CD4-positive, alpha-beta T cell (primary cell): ENCODE measurements at regions of chrX and their contacts with region 1.

Region 1: DNA sequence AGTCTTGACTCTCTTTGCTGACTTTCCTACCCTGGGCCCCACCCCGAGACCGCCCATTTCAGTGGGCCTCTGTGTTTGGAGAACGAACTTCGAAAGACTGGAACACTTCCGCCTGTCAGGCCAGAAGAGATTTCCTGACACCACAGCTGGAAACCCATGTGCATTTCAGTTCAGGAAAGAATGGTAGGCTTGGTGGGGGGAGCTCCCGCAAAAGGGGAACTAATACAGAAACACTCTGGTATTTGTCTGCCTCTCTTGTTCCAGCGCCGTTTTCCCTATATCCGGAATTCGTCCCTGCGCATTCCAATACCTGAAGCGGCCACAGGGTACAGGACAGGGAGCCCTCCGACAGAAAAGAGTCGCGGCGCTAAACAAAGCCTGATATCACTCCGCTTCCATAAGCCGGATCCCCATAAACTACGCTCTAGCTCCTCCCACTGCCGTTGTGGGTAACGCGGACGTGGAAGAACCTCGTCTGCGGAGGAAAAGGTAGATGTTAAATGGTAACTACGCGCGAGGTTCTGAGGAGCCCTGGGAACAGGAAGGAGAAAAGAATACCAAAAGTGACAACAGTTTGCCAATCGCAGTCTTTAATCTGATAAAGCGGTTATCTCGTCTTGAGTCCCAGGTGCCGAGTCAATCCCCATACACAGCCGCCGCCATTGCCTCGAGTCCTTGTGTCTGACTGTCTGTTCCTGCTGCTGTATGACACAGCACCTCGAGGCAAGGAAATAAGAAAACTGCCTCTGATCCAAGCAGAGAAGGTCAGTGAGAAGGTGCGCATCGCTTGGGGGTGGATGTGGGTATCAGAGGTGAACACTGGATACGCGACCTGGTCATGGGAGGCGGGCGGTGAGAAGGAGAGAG is at the start of gene ARMCX5:
- DNase-seq: peak; percentile 46 to 88 (median 58)
- ATAC-seq: peak; percentile 85
- H3K4me3 ChIP-seq: peak within 1 kb of the TSS; percentile 71
- H3K4me3 Mint-ChIP-seq: peak within 1 kb of the TSS; percentile 99
- H3K27ac ChIP-seq: peak within 1 kb of the TSS; percentile 55 to 70
- H3K27ac Mint-ChIP-seq: peak within 1 kb of the TSS; percentile 100
- H3K4me1 ChIP-seq: peaks cover 11% of the 10 kb centered on the region
- H3K4me1 Mint-ChIP-seq: peaks cover 52% of the 10 kb centered on the region
- H3K27me3 ChIP-seq: no peaks in the 10 kb centered on the region
- H3K27me3 Mint-ChIP-seq: no peaks in the 10 kb centered on the region
- CTCF ChIP-seq: no peak
- total RNA-seq, gene ARMCX5: 14.0 to 15.9 TPM

Region 2: DNA sequence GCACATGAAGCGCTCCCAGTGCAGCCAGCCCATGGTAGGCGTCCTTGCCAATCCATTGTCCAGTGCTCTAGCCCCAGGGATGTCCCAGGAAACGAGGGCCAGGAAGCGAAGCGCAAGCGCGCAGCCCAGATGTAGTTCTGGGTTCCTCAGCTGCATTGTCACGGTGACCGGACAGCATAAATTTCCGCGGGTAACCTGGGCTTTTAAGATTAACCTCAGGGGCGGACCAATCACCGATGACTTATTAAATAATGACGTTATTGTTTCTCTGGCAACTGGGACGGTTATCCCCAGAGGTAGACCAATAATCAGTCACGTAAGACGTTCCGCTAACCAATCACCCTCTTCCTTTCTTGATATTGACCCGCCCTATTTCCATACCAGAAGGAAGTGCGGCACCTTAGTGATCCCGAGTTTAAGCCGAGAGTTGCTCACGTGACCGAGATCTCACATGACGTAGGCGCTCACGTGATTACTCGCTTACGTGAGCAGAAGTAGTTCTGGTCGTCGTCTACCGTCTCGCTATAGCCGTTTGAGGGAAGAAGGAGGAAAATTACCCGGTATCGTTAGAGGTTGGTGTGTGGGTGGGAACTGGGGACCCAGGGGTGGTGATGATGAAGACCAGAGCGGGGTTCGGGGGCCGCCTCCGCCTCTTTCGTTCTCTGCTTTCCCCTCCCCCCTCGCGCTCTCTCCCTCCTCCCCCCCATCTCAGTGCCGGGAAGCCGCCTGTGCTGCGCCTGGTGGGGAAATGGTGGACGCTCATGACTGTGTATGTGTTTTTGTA is 1191.4 kb before region 1 on chrX and contains the starts of genes GLA and HNRNPH2:
- CTCF ChIA-PET with region 1: no interaction called
- POLR2A ChIA-PET with region 1: no interaction called
- intact Hi-C with region 1: loop called in 1 of 2 experiments (anchors 10 kb)
- DNase-seq: peak; percentile 67 to 97 (median 80)
- ATAC-seq: peak; percentile 91
- H3K4me3 ChIP-seq: peak within 1 kb of the TSS; percentile 85
- H3K4me3 Mint-ChIP-seq: peak within 1 kb of the TSS; percentile 97
- H3K27ac ChIP-seq: peak within 1 kb of the TSS; percentile 92 to 99
- H3K27ac Mint-ChIP-seq: peak within 1 kb of the TSS; percentile 97
- H3K4me1 ChIP-seq: peaks cover 29% of the 10 kb centered on the region
- H3K4me1 Mint-ChIP-seq: peaks cover 41% of the 10 kb centered on the region
- H3K27me3 ChIP-seq: no peaks in the 10 kb centered on the region
- H3K27me3 Mint-ChIP-seq: no peaks in the 10 kb centered on the region
- CTCF ChIP-seq: no peak
- total RNA-seq, gene GLA: 26.6 to 26.8 TPM
- total RNA-seq, gene HNRNPH2: 50.9 to 51.4 TPM

Region 3: DNA sequence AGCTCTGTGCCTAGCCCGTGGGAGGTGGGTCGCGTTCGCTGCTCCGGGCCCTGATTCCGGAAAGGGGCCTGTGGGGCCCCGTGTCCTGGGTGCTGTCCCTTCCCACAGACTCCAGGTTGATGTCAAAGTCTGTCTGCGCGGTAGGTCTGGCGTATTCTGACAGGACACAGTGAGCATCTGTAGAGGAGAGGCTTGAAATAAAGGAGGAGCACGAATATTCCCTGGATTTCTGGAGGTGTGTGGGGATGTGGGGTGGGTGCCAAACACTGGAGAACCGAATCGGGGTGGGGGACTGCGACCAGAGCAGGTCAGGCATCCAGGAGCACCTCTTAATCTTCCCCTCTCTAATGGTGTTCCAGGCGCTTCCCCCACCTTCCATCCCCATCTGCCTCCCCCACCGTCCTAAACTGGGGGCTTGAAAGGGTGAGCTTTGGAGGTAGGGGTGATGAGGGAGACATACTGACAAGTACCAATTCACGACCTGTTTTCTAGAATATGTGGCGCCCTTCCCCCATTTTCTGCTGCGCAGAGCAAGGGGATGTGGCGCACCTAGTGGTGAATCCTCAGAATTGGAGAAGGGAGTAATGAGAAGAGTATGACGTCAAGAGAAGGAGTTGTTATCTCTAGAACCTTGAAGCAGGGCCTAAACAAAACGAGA is 52.8 kb after region 1 on chrX:
- CTCF ChIA-PET with region 1: interaction called, 3 read pairs
- POLR2A ChIA-PET with region 1: interaction called, 26 read pairs
- intact Hi-C with region 1: loop called (anchors 1 to 2 kb)
- DNase-seq: peak; percentile 34 to 84 (median 56)
- ATAC-seq: peak; percentile 75
- H3K4me3 ChIP-seq: peak overlapping the region; percentile 84
- H3K4me3 Mint-ChIP-seq: peak overlapping the region; percentile 96
- H3K27ac ChIP-seq: peak overlapping the region; percentile 40 to 64
- H3K27ac Mint-ChIP-seq: peak overlapping the region; percentile 97
- H3K4me1 ChIP-seq: peaks cover 18% of the 10 kb centered on the region
- H3K4me1 Mint-ChIP-seq: peaks cover 45% of the 10 kb centered on the region
- H3K27me3 ChIP-seq: no peaks in the 10 kb centered on the region
- H3K27me3 Mint-ChIP-seq: no peaks in the 10 kb centered on the region
- CTCF ChIP-seq: peak; percentile 54

Region 4: GRCh38 chrX:102720237-102721168 is 121.2 kb after region 1 on chrX and contains the start of gene GPRASP3:
- CTCF ChIA-PET with region 1: no interaction called
- POLR2A ChIA-PET with region 1: interaction called, 16 read pairs
- intact Hi-C with region 1: no loop called
- DNase-seq: peak; percentile 39 to 83 (median 62)
- ATAC-seq: peak; percentile 99
- H3K4me3 ChIP-seq: peak within 1 kb of the TSS; percentile 56
- H3K4me3 Mint-ChIP-seq: peak within 1 kb of the TSS; percentile 92
- H3K27ac ChIP-seq: no peak within 1 kb of the TSS
- H3K27ac Mint-ChIP-seq: peak within 1 kb of the TSS; percentile 77
- H3K4me1 ChIP-seq: peaks cover 8% of the 10 kb centered on the region
- H3K4me1 Mint-ChIP-seq: peaks cover 13% of the 10 kb centered on the region
- H3K27me3 ChIP-seq: no peaks in the 10 kb centered on the region
- H3K27me3 Mint-ChIP-seq: no peaks in the 10 kb centered on the region
- CTCF ChIP-seq: no peak
- total RNA-seq, gene GPRASP3: 1.5 to 2.6 TPM